ENCODE measurements at regions of chr17 and their contacts with region 1.

Region 1: GRCh38 chr17:79045842-79046196 is 21.9 kb downstream of the C1QTNF1 start:
- DNase-seq: peak; percentile 48 to 59 (median 53)
- H3K4me3 ChIP-seq: no peak overlapping the region
- H3K4me3 Mint-ChIP-seq: peak overlapping the region in 1 of 8 donors; percentile 21
- H3K27ac ChIP-seq: no peak overlapping the region
- H3K27ac Mint-ChIP-seq: peak overlapping the region in 1 of 7 donors; percentile 65
- H3K4me1 ChIP-seq: no peaks in the 10 kb centered on the region
- H3K4me1 Mint-ChIP-seq: peaks cover 0 to 11% (median 6%) of the 10 kb centered on the region in 4 donors
- H3K27me3 ChIP-seq: no peaks in the 10 kb centered on the region
- H3K27me3 Mint-ChIP-seq: peaks cover 19 to 20% of the 10 kb centered on the region in 2 donors

Region 2: GRCh38 chr17:78915872-78916632 is 129.8 kb before region 1 on chr17:
- CTCF ChIA-PET with region 1: no interaction called
- POLR2A ChIA-PET with region 1: no interaction called
- intact Hi-C with region 1: no loop called
- DNase-seq: no peak
- H3K4me3 ChIP-seq: no peak overlapping the region
- H3K4me3 Mint-ChIP-seq: no peak overlapping the region
- H3K27ac ChIP-seq: no peak overlapping the region
- H3K27ac Mint-ChIP-seq: no peak overlapping the region
- H3K4me1 ChIP-seq: no peaks in the 10 kb centered on the region
- H3K4me1 Mint-ChIP-seq: no peaks in the 10 kb centered on the region
- H3K27me3 ChIP-seq: no peaks in the 10 kb centered on the region
- H3K27me3 Mint-ChIP-seq: peaks cover 3 to 4% of the 10 kb centered on the region in 2 donors

Region 3: DNA sequence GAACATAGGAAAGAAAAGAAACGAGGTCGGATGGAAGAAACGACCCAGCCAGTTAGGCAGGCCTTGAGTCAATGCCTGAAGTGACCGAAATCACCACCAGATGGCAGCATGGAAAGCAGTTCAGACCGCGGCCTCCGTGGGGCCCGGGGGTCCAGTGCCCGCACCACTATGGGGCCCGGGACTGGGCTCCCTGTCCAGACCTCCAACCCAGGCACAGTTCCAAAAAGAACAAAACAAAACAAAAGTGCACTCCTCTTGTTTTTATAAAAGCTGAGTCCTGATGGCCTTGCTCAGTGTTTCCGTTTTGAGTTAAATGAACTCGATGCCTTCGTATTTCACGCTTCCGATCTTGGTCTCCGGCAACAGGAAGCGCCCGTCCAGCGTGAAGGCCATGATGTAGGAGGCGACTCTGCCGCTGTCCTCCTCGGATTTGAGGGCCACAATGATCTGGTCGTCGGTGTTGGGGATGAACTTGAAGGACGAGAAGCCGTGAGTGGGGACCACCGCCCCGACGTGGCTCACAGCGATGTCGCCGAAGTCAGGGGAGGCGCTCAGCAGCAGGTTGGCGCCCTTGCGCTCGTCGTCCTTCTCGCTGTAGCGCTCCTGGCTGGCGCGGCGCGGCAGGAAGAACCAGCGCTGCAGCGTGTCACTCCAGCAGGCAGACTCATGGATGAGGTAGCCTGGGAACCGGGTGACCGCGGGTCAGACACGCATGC is 52.4 kb before region 1 on chr17:
- CTCF ChIA-PET with region 1: interaction called, 3 read pairs
- POLR2A ChIA-PET with region 1: no interaction called
- intact Hi-C with region 1: loop called (anchors 1 kb)
- DNase-seq: peak in 4 of 5 donors; percentile 19 to 37 (median 32)
- H3K4me3 ChIP-seq: no peak overlapping the region
- H3K4me3 Mint-ChIP-seq: no peak overlapping the region
- H3K27ac ChIP-seq: no peak overlapping the region
- H3K27ac Mint-ChIP-seq: peak overlapping the region in 4 of 7 donors; percentile 48 to 68 (median 68)
- H3K4me1 ChIP-seq: no peaks in the 10 kb centered on the region
- H3K4me1 Mint-ChIP-seq: peaks cover 3 to 14% (median 8%) of the 10 kb centered on the region in 4 donors
- H3K27me3 ChIP-seq: no peaks in the 10 kb centered on the region
- H3K27me3 Mint-ChIP-seq: no peaks in the 10 kb centered on the region

Region 4: GRCh38 chr17:79019632-79020584 is 25.9 kb before region 1 on chr17:
- CTCF ChIA-PET with region 1: no interaction called
- POLR2A ChIA-PET with region 1: interaction called, 3 read pairs
- intact Hi-C with region 1: loop called (anchors 1 kb)
- DNase-seq: peak; percentile 42 to 70 (median 52)
- H3K4me3 ChIP-seq: no peak overlapping the region
- H3K4me3 Mint-ChIP-seq: no peak overlapping the region
- H3K27ac ChIP-seq: no peak overlapping the region
- H3K27ac Mint-ChIP-seq: no peak overlapping the region
- H3K4me1 ChIP-seq: peaks cover 13% of the 10 kb centered on the region
- H3K4me1 Mint-ChIP-seq: peaks cover 2 to 15% (median 4%) of the 10 kb centered on the region in 4 donors
- H3K27me3 ChIP-seq: peaks cover 7% of the 10 kb centered on the region
- H3K27me3 Mint-ChIP-seq: peaks cover 0 to 16% of the 10 kb centered on the region in 2 donors

Region 5: GRCh38 chr17:79065105-79065670 is 19.4 kb after region 1 on chr17:
- CTCF ChIA-PET with region 1: interaction called, 10 read pairs
- POLR2A ChIA-PET with region 1: no interaction called
- intact Hi-C with region 1: no loop called
- DNase-seq: peak; percentile 59 to 68 (median 63)
- H3K4me3 ChIP-seq: no peak overlapping the region
- H3K4me3 Mint-ChIP-seq: peak overlapping the region in 6 of 8 donors; percentile 15 to 73 (median 64)
- H3K27ac ChIP-seq: no peak overlapping the region
- H3K27ac Mint-ChIP-seq: peak overlapping the region in 3 of 7 donors; percentile 49 to 53 (median 51)
- H3K4me1 ChIP-seq: peaks cover 5% of the 10 kb centered on the region
- H3K4me1 Mint-ChIP-seq: peaks cover 2 to 5% (median 3%) of the 10 kb centered on the region in 4 donors
- H3K27me3 ChIP-seq: no peaks in the 10 kb centered on the region
- H3K27me3 Mint-ChIP-seq: peaks cover 1% of the 10 kb centered on the region in 2 donors

Region 6: GRCh38 chr17:79082311-79083190 is 36.7 kb after region 1 on chr17:
- CTCF ChIA-PET with region 1: interaction called, 7 read pairs
- POLR2A ChIA-PET with region 1: no interaction called
- intact Hi-C with region 1: loop called (anchors 2 kb)
- DNase-seq: peak in 4 of 5 donors; percentile 30 to 55 (median 41)
- H3K4me3 ChIP-seq: no peak overlapping the region
- H3K4me3 Mint-ChIP-seq: no peak overlapping the region
- H3K27ac ChIP-seq: no peak overlapping the region
- H3K27ac Mint-ChIP-seq: no peak overlapping the region
- H3K4me1 ChIP-seq: no peaks in the 10 kb centered on the region
- H3K4me1 Mint-ChIP-seq: peaks cover 0 to 10% (median 2%) of the 10 kb centered on the region in 4 donors
- H3K27me3 ChIP-seq: no peaks in the 10 kb centered on the region
- H3K27me3 Mint-ChIP-seq: no peaks in the 10 kb centered on the region

Region 7: DNA sequence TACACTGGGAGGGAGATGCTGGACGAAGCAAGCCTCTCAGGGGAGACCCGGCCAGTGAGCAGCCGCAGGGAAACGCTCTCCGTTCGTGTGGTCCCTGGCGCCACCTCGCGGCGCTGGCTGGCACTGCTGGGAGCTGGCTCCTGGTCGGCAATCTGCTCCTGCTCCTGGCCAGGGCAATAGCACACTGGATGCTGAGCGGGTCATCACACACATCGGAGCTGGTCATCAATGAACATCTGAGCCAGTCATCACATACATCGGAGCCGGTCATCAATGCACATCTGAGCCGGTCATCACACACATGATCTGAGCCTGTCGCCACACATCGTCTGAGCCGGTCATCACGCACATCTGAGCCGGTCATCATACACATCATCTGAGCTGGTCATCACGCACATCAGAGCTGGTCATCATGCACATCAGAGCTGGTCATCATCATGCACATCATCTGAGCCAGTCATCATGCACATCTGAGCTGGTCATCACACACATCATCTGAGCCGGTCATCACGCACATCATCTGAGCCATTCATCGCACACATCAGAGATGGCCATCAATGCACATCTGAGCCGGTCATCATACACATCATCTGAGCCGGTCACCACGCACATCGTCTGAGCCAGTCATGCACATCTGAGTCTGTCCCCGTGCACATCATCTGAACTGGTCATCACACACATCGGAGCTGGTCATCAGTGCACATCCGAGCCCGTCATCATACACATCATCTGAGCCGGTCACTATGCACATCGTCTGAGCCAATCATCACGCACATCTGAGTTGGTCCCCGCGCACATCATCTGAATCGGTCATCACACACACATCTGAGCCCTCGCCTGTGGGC is 347.8 kb after region 1 on chr17:
- CTCF ChIA-PET with region 1: interaction called, 20 read pairs
- POLR2A ChIA-PET with region 1: no interaction called
- intact Hi-C with region 1: loop called (anchors 1 kb)
- DNase-seq: peak in 4 of 5 donors; percentile 43 to 59 (median 55)
- H3K4me3 ChIP-seq: no peak overlapping the region
- H3K4me3 Mint-ChIP-seq: no peak overlapping the region
- H3K27ac ChIP-seq: no peak overlapping the region
- H3K27ac Mint-ChIP-seq: no peak overlapping the region
- H3K4me1 ChIP-seq: no peaks in the 10 kb centered on the region
- H3K4me1 Mint-ChIP-seq: peaks cover 0 to 10% (median 6%) of the 10 kb centered on the region in 4 donors
- H3K27me3 ChIP-seq: no peaks in the 10 kb centered on the region
- H3K27me3 Mint-ChIP-seq: peaks cover 30 to 39% of the 10 kb centered on the region in 2 donors

Measured in CD4-positive, alpha-beta memory T cell (primary cell).